ENCODE measurements at regions of chr3 and their contacts with region 1.

Region 1: GRCh38 chr3:4350789-4351163 is 47.6 kb downstream of the SETMAR start:
- DNase-seq: peak; percentile 64
- H3K4me3 ChIP-seq: no peak overlapping the region
- H3K27ac ChIP-seq: no peak overlapping the region
- H3K4me1 ChIP-seq: peaks cover 0 to 11% of the 10 kb centered on the region in 2 experiments; a peak in 2 of 4 replicates
- H3K27me3 ChIP-seq: no peaks in the 10 kb centered on the region
- CTCF ChIP-seq: peak; percentile 87
- EP300 ChIP-seq: no peak
- RAD21 ChIP-seq: peak; percentile 95

Region 2: GRCh38 chr3:4271834-4272233 is 78.9 kb before region 1 on chr3:
- CTCF ChIA-PET with region 1: no interaction called
- POLR2A ChIA-PET with region 1: no interaction called
- DNase-seq: peak; percentile 20
- H3K4me3 ChIP-seq: no peak overlapping the region; a peak in 1 of 4 replicates
- H3K27ac ChIP-seq: no peak overlapping the region
- H3K4me1 ChIP-seq: no peaks in the 10 kb centered on the region; a peak in 1 of 4 replicates
- H3K27me3 ChIP-seq: no peaks in the 10 kb centered on the region
- CTCF ChIP-seq: peak; percentile 65
- EP300 ChIP-seq: no peak
- RAD21 ChIP-seq: peak; percentile 57

Region 3: GRCh38 chr3:4340411-4341335 is 10.1 kb before region 1 on chr3:
- CTCF ChIA-PET with region 1: interaction called, 27 read pairs
- POLR2A ChIA-PET with region 1: no interaction called
- DNase-seq: no peak
- H3K4me3 ChIP-seq: no peak overlapping the region
- H3K27ac ChIP-seq: no peak overlapping the region
- H3K4me1 ChIP-seq: peaks cover 5% of the 10 kb centered on the region in 2 experiments; a peak in 2 of 4 replicates
- H3K27me3 ChIP-seq: no peaks in the 10 kb centered on the region
- CTCF ChIP-seq: no peak
- EP300 ChIP-seq: no peak
- RAD21 ChIP-seq: no peak

Region 4: GRCh38 chr3:4493014-4493940 is 142.5 kb after region 1 on chr3 and contains the start of gene ITPR1:
- CTCF ChIA-PET with region 1: interaction called, 44 read pairs
- POLR2A ChIA-PET with region 1: interaction called, 17 read pairs
- DNase-seq: peak; percentile 96
- H3K4me3 ChIP-seq: peak within 1 kb of the TSS; percentile 92 to 96
- H3K27ac ChIP-seq: peak within 1 kb of the TSS; percentile 39 to 92; a peak in 3 of 4 replicates
- H3K4me1 ChIP-seq: peaks cover 0 to 21% of the 10 kb centered on the region in 2 experiments; a peak in 2 of 4 replicates
- H3K27me3 ChIP-seq: no peaks in the 10 kb centered on the region
- CTCF ChIP-seq: no peak
- EP300 ChIP-seq: 0 out of 4 replicates have a peak, but pooled peaks of 1 of the 2 experiments have one; percentile 7
- RAD21 ChIP-seq: peak; percentile 44
- polyA plus RNA-seq, gene ITPR1: 5.9 and 8.0 TPM in 2 replicates

Region 5: GRCh38 chr3:4504340-4505261 is 153.8 kb after region 1 on chr3:
- CTCF ChIA-PET with region 1: interaction called, 14 read pairs
- POLR2A ChIA-PET with region 1: no interaction called
- DNase-seq: peak; percentile 61
- H3K4me3 ChIP-seq: peak overlapping the region; percentile 15 to 55; a peak in 3 of 4 replicates
- H3K27ac ChIP-seq: peak overlapping the region; percentile 39 to 89; a peak in 3 of 4 replicates
- H3K4me1 ChIP-seq: peaks cover 9 to 54% of the 10 kb centered on the region in 2 experiments; a peak in 2 of 4 replicates
- H3K27me3 ChIP-seq: no peaks in the 10 kb centered on the region
- CTCF ChIP-seq: no peak
- EP300 ChIP-seq: peak in 1 of 2 experiments; percentile 84; a peak in 2 of 4 replicates
- RAD21 ChIP-seq: peak; percentile 18

Region 6: DNA sequence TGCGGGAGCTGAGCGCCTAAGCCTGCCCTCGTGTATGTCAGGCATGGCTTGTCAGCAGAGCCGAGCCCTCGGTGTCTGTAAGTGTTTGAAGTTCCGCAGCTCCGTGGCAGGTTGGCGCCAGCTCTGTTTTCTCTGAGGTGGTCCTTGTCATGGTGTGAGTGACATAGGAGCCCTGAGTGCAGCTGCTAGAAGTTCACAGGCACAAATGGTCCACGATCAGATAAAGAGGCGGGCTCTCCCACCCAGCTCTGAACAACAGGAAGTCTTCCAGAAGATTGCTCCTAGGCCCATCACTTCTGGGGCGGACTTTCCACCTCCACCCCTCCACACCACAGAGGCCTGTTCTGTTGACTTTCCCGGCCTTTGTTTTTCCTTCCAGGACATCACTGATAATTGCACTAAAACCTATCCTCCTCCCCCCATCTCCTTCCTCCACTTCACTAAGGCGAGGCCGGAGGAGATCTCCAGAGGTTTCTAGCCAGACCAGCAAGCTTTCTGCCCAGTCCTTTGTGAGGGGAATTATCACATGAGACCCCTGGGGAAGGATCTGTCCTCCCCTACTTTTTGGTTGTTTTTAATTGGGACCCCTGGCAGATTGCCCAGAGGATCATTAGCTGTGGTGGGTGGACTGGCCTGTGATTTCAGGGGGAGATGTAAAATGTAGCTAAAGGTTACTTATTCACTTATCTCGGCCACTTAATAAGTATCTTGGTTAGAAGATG is 162.3 kb after region 1 on chr3:
- CTCF ChIA-PET with region 1: interaction called, 13 read pairs
- POLR2A ChIA-PET with region 1: no interaction called
- DNase-seq: peak; percentile 51
- H3K4me3 ChIP-seq: no peak overlapping the region
- H3K27ac ChIP-seq: peak overlapping the region in 1 of 2 experiments; percentile 89; a peak in 2 of 4 replicates
- H3K4me1 ChIP-seq: peaks cover 0 to 45% of the 10 kb centered on the region in 2 experiments; a peak in 2 of 4 replicates
- H3K27me3 ChIP-seq: no peaks in the 10 kb centered on the region
- CTCF ChIP-seq: no peak
- EP300 ChIP-seq: no peak
- RAD21 ChIP-seq: no peak

Region 7: GRCh38 chr3:4524088-4525023 is 173.6 kb after region 1 on chr3:
- CTCF ChIA-PET with region 1: interaction called, 17 read pairs
- POLR2A ChIA-PET with region 1: interaction called, 3 read pairs
- DNase-seq: peak; percentile 50
- H3K4me3 ChIP-seq: peak overlapping the region in 1 of 2 experiments; percentile 4; a peak in 1 of 4 replicates
- H3K27ac ChIP-seq: peak overlapping the region; percentile 62 to 97
- H3K4me1 ChIP-seq: peaks cover 6 to 42% of the 10 kb centered on the region in 2 experiments; a peak in 2 of 4 replicates
- H3K27me3 ChIP-seq: no peaks in the 10 kb centered on the region
- CTCF ChIP-seq: no peak
- EP300 ChIP-seq: peak; percentile 84 to 97; a peak in 3 of 4 replicates
- RAD21 ChIP-seq: peak; percentile 43; the same call in 1 of the 2 replicates

Measured in SK-N-SH (cell line).